CD4-positive, alpha-beta T cell (primary cell): ENCODE measurements at regions of chr11 and their contacts with region 1.

Region 1: DNA sequence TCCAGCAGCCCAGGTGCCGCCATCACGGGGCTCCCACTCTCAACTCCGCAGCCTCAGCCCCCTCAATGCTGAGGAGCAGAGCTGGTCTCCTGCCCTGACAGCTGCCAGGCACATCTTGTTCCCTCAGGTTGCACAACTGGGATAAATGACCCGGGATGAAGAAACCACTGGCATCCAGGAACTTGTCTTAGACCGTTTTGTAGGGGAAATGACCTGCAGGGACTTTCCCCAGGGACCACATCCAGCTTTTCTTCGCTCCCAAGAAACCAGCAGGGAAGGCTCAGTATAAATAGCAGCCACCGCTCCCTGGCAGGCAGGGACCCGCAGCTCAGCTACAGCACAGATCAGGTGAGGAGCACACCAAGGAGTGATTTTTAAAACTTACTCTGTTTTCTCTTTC is at the start of gene SAA1:
- DNase-seq: no peak
- ATAC-seq: no peak
- H3K4me3 ChIP-seq: no peak within 1 kb of the TSS
- H3K4me3 Mint-ChIP-seq: no peak within 1 kb of the TSS
- H3K27ac ChIP-seq: no peak within 1 kb of the TSS
- H3K27ac Mint-ChIP-seq: no peak within 1 kb of the TSS
- H3K4me1 ChIP-seq: peaks cover 2% of the 10 kb centered on the region
- H3K4me1 Mint-ChIP-seq: no peaks in the 10 kb centered on the region
- H3K27me3 ChIP-seq: no peaks in the 10 kb centered on the region
- H3K27me3 Mint-ChIP-seq: no peaks in the 10 kb centered on the region
- CTCF ChIP-seq: no peak
- total RNA-seq, gene SAA1: not detected

Region 2: DNA sequence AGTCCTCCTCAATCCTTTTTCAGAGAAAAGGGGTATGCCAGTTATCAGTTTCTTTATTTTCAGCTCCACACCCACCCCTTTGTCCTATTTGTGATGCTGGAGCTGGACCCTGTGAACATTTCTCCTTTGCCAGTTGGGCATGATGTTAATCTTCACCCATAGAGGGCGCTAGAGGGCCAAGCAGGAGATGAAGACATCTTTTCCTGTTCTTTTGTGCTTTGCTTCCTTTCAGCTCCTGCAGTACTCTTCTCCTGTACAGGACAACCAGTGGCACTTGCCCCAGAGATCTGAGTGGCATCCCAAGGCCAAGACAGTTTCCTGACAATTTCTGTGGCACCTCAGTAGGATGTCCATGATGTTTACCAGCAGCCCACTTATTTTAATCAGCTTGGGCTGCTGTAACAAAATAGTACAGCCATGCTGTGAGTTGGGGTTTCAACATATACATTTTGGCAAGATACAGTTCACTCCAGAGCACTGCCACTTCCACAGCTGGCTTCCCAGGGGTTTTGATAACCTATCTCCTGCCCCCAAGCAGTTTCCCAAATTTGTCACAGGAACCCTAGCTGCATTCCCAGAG is 22.1 kb before region 1 on chr11:
- CTCF ChIA-PET with region 1: no interaction called
- POLR2A ChIA-PET with region 1: no interaction called
- intact Hi-C with region 1: loop called (anchors 1 to 2 kb)
- DNase-seq: peak; percentile 30 to 86 (median 44)
- ATAC-seq: peak; percentile 54
- H3K4me3 ChIP-seq: no peak overlapping the region
- H3K4me3 Mint-ChIP-seq: no peak overlapping the region
- H3K27ac ChIP-seq: no peak overlapping the region
- H3K27ac Mint-ChIP-seq: no peak overlapping the region
- H3K4me1 ChIP-seq: peaks cover 14% of the 10 kb centered on the region
- H3K4me1 Mint-ChIP-seq: peaks cover 13% of the 10 kb centered on the region
- H3K27me3 ChIP-seq: peaks cover 4 to 10% of the 10 kb centered on the region in 2 experiments
- H3K27me3 Mint-ChIP-seq: peaks cover 13% of the 10 kb centered on the region
- CTCF ChIP-seq: peak; percentile 69